CD14-positive monocyte (primary cell): ENCODE measurements at regions of chr1 and their contacts with region 1.

Region 1: GRCh38 chr1:26279456-26280332 is at the start of gene SH3BGRL3:
- DNase-seq: peak; percentile 87 to 90 (median 88)
- H3K4me3 ChIP-seq: peak within 1 kb of the TSS; percentile 74 to 93 (median 83)
- H3K4me3 Mint-ChIP-seq: peak within 1 kb of the TSS; percentile 91 to 92
- H3K27ac ChIP-seq: peak within 1 kb of the TSS; percentile 99 to 100
- H3K27ac Mint-ChIP-seq: peak within 1 kb of the TSS; percentile 96 to 100 (median 100)
- H3K4me1 ChIP-seq: peaks cover 93 to 94% of the 10 kb centered on the region in 2 donors
- H3K4me1 Mint-ChIP-seq: peaks cover 88% of the 10 kb centered on the region
- H3K27me3 ChIP-seq: no peaks in the 10 kb centered on the region
- H3K27me3 Mint-ChIP-seq: peaks cover 0 to 7% (median 2%) of the 10 kb centered on the region in 3 donors
- CTCF ChIP-seq: no peak
- polyA plus RNA-seq, gene SH3BGRL3: 478 to 1,744 (median 1,706) TPM

Region 2: GRCh38 chr1:25990702-25991395 is 288.8 kb before region 1 on chr1:
- intact Hi-C with region 1: no loop called
- DNase-seq: no peak
- H3K4me3 ChIP-seq: no peak overlapping the region
- H3K4me3 Mint-ChIP-seq: peak overlapping the region; percentile 3 to 84
- H3K27ac ChIP-seq: no peak overlapping the region
- H3K27ac Mint-ChIP-seq: peak overlapping the region in 4 of 7 donors; percentile 13 to 82 (median 34)
- H3K4me1 ChIP-seq: peaks cover 20 to 25% of the 10 kb centered on the region in 2 donors
- H3K4me1 Mint-ChIP-seq: peaks cover 31% of the 10 kb centered on the region
- H3K27me3 ChIP-seq: no peaks in the 10 kb centered on the region
- H3K27me3 Mint-ChIP-seq: peaks cover 0 to 7% (median 0%) of the 10 kb centered on the region in 3 donors
- CTCF ChIP-seq: no peak

Region 3: DNA sequence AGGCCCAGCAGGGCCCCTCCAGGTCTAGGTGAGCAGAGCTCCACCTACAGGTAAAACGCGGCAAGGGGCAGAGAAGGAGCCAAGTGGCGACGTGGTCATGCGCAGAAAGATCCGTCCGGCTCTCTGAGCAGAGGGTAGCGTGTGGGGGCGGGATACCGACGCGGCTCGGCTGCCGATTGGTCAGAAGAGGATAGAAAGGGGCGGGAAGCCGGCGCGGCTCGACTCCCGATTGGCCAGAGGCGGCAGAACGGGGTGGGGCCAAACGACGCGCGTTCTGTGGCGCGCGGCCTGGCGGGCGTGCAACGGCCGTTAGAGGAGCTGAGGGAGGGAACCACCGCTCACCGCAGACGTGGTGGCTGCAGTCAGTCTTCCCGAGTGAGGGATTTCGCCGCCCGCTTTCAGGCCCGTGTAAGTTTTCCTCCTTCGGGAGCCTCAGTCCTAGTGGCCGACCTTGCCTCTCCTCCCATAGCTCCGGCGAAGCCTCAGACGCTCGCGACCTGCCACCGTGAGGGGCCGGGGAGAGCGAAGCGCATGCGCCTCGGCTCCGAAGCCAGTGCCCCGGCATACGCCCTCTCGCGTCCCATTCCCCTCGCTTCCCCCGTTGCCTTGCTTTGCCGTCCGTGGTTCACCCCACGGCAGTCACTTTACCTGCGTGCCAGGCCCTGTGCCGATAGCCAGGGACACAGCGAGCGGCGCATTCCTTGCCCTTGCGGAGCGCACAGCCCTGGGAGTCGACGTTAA is 45.6 kb before region 1 on chr1 and contains the start of gene CEP85:
- intact Hi-C with region 1: loop called in 1 of 2 experiments (anchors 2 kb)
- DNase-seq: peak; percentile 95 to 97 (median 97)
- H3K4me3 ChIP-seq: peak within 1 kb of the TSS; percentile 65 to 98 (median 81)
- H3K4me3 Mint-ChIP-seq: peak within 1 kb of the TSS; percentile 99
- H3K27ac ChIP-seq: peak within 1 kb of the TSS; percentile 70 to 98
- H3K27ac Mint-ChIP-seq: peak within 1 kb of the TSS; percentile 91 to 97 (median 96)
- H3K4me1 ChIP-seq: peaks cover 29 to 39% of the 10 kb centered on the region in 2 donors
- H3K4me1 Mint-ChIP-seq: peaks cover 32% of the 10 kb centered on the region
- H3K27me3 ChIP-seq: no peaks in the 10 kb centered on the region
- H3K27me3 Mint-ChIP-seq: peaks cover 0 to 2% (median 2%) of the 10 kb centered on the region in 3 donors
- CTCF ChIP-seq: peak; percentile 52
- polyA plus RNA-seq, gene CEP85: 8.2 to 32.5 (median 10.9) TPM

Region 4: DNA sequence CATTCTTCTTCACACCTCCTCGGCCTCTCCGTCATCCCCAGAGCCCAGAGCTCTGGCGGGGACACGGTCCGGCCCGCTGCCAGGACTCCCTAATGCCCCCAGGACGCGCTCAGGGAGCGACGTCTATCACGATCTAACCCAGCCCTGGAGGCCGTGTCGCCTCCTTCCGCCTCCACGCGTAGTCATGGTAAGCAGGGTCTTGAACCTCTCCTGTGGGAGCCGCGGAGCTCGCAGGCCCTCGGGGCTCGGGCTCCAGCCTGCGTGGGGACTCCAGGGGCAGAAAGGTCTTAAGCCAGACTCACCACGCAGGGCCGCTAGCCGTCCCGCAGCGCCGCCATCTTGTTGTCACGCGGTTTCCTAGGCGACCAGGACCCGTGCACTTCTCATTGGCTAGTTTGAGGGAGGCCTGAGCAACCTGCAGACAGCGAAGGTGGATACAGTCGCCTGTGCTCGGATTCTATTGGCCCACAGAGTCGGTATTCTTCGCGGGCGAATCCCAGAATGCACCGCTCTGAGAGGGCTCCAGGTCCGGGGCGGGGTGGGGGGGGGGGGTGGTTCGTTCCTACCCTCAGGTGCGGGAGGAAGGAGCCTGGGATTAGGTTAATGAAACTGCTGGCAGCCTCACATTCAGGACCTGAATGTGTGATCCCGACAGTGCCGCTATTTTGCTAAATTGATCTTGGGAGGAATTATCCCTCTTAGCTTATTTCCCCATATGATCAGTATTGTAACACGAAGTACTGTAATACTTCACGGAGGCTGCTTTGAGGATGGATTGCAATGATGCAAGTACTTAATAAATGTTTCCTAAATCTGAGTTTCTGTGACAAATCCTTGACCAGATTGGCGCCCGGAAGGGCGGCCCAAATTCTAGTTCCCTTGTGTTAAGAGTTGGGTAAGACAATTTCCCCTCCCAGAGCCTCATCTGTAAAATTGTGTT is 26.9 kb after region 1 on chr1 and contains the start of gene UBXN11:
- intact Hi-C with region 1: loop called in 1 of 2 experiments (anchors 2 kb)
- DNase-seq: peak; percentile 91 to 98 (median 92)
- H3K4me3 ChIP-seq: peak within 1 kb of the TSS; percentile 58 to 83 (median 71)
- H3K4me3 Mint-ChIP-seq: peak within 1 kb of the TSS; percentile 95 to 98
- H3K27ac ChIP-seq: peak within 1 kb of the TSS; percentile 91 to 97
- H3K27ac Mint-ChIP-seq: peak within 1 kb of the TSS; percentile 95 to 100 (median 100)
- H3K4me1 ChIP-seq: peaks cover 79 to 91% of the 10 kb centered on the region in 2 donors
- H3K4me1 Mint-ChIP-seq: peaks cover 77% of the 10 kb centered on the region
- H3K27me3 ChIP-seq: no peaks in the 10 kb centered on the region
- H3K27me3 Mint-ChIP-seq: peaks cover 0 to 7% (median 0%) of the 10 kb centered on the region in 3 donors
- CTCF ChIP-seq: no peak
- polyA plus RNA-seq, gene UBXN11: 48.0 to 885 (median 52.1) TPM

Region 5: GRCh38 chr1:26363549-26364448 is 84.1 kb after region 1 on chr1:
- intact Hi-C with region 1: no loop called
- DNase-seq: peak; percentile 66 to 74 (median 69)
- H3K4me3 ChIP-seq: no peak overlapping the region
- H3K4me3 Mint-ChIP-seq: peak overlapping the region in 1 of 2 donors; percentile 55
- H3K27ac ChIP-seq: no peak overlapping the region
- H3K27ac Mint-ChIP-seq: no peak overlapping the region
- H3K4me1 ChIP-seq: peaks cover 10 to 12% of the 10 kb centered on the region in 2 donors
- H3K4me1 Mint-ChIP-seq: peaks cover 27% of the 10 kb centered on the region
- H3K27me3 ChIP-seq: peaks cover 17 to 49% of the 10 kb centered on the region in 2 donors
- H3K27me3 Mint-ChIP-seq: peaks cover 42 to 72% (median 54%) of the 10 kb centered on the region in 3 donors
- CTCF ChIP-seq: peak; percentile 94

Region 6: DNA sequence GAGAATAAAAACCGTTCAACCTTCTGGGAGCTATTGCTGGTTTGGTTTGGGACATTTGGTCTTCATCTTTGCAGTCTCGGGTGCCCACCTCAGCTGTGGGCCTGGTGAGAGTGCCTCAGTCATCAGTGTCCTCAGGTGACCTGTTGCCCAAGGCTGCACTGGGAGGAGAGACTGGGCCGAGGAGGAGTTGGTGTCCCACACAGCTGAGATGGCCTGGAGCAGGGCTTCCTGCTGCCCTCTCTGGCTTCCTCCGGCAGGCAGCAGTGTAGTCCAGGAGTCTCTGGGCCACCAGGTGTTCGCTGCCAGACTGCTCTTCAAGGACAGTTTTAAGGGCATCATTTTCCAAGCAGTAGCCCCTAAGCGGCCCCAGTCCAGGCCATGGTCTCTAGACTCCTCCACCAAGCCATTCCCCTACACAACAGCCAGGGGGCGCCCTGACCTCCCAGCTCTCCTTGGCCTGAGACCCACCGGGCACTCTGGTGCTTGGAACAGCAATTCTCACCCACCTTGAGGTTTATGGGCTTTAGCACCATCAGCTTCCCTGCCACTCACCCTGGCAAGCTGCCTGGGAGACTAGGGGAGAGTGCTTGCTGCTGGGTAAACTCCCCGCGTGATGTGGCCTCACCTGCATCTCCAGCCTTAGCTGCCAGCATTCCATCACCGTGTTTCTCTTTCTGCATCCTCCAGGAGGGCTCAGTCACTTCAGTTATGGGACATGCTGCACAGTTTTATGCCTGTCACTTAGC is 1053.0 kb after region 1 on chr1:
- intact Hi-C with region 1: no loop called
- DNase-seq: peak in 2 of 3 donors; percentile 38 to 49
- H3K4me3 ChIP-seq: no peak overlapping the region
- H3K4me3 Mint-ChIP-seq: no peak overlapping the region
- H3K27ac ChIP-seq: peak overlapping the region in 1 of 2 donors; percentile 48
- H3K27ac Mint-ChIP-seq: peak overlapping the region in 1 of 7 donors; percentile 66
- H3K4me1 ChIP-seq: peaks cover 4 to 6% of the 10 kb centered on the region in 2 donors
- H3K4me1 Mint-ChIP-seq: peaks cover 7% of the 10 kb centered on the region
- H3K27me3 ChIP-seq: no peaks in the 10 kb centered on the region
- H3K27me3 Mint-ChIP-seq: peaks cover 0 to 3% (median 2%) of the 10 kb centered on the region in 3 donors
- CTCF ChIP-seq: peak; percentile 93